ENCODE measurements at regions of chr1 and their contacts with region 1.

Region 1: GRCh38 chr1:41282679-41283317 is 40.7 kb upstream of the SCMH1 start:
- DNase-seq: no peak
- H3K4me3 ChIP-seq: no peak overlapping the region
- CTCF ChIP-seq: peak; percentile 93

Region 2: DNA sequence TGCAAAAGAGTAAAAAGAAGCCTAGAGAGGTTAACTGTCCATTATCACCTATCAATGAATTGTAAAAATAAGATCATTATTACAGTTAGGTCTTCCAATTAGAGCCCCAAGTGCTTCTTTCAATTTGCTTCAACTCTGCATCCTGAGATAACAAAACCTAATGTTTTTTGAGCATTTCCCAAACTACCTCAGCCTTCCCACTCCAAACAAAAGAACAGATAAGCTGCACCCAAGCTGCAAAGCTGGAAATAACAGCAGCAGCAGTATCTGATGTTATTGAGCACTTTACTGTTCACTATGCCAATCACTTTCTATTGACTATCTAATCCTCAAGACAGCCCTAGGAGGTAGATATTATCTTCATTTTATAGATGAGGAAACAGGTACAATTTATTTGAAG is 164.2 kb before region 1 on chr1:
- CTCF ChIA-PET with region 1: no interaction called
- POLR2A ChIA-PET with region 1: no interaction called
- DNase-seq: no peak
- H3K4me3 ChIP-seq: no peak overlapping the region
- CTCF ChIP-seq: no peak

Region 3: DNA sequence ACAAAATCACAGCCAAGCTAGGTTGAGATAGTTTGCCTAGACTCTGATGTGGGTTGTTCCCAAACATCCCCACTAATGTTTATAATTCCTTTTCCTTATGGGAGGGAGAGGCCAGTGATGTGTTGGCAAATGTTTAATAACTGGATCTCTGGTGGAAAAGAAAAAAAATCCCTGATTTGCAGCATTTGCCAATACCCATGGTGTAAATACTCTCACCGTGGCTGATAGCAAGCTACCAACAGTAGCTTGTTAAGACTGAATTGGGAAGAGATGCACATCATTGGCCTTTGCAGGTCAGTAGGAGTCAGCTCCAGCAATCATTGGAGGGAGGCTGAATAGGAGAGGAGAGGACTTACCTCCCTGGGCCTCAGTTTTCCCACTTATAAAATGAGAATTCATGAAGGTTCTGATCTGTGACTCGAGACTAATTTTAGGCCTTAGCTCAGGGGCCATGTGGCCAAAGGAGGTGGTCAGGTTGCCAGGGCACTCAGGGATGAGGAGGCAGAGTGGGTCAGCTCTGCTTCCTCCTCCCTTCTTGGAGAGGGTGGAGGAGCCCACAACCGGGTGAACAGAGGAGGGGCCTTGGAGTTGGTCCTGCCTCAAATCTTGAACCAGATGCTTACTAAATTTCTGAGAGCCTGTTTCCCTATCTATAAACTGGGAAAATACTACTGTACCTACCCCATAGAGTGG is 20.7 kb before region 1 on chr1:
- CTCF ChIA-PET with region 1: interaction called, 37 read pairs
- POLR2A ChIA-PET with region 1: no interaction called
- DNase-seq: no peak
- H3K4me3 ChIP-seq: no peak overlapping the region
- CTCF ChIP-seq: no peak

Region 4: DNA sequence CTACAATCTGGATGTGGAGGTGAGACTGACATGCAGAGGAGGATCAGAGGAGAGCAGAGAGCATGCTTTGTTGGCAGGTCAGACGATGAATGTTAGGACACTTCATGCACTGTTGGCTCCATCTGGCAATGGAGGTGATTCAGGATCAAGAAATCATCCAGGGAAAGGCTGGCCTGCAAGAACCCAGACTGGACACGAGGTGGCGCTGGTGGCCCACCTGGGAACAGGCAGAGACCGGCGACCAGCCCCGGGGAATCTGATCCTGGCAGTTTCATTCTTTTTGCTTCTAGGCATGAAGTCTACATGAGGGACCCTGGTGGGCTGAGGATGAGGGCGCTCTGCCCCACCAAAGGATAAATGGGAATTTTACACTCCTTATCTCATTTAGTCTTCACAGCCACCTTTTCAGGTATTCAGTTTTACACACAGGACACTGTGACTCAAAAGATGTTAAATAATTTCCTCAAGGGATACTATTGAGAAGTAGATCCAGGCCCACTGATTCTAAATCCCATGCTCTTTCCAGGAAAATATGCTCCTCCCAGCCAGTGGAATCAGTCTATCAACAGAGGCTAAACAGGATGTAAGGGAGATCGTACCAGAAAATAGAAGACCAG is 14.5 kb before region 1 on chr1:
- CTCF ChIA-PET with region 1: interaction called, 37 read pairs
- POLR2A ChIA-PET with region 1: no interaction called
- DNase-seq: no peak
- H3K4me3 ChIP-seq: no peak overlapping the region
- CTCF ChIP-seq: peak; percentile 93

Region 5: GRCh38 chr1:41294216-41294615 is 11.4 kb after region 1 on chr1:
- CTCF ChIA-PET with region 1: interaction called, 22 read pairs
- POLR2A ChIA-PET with region 1: no interaction called
- DNase-seq: no peak
- H3K4me3 ChIP-seq: no peak overlapping the region
- CTCF ChIP-seq: no peak

Region 6: DNA sequence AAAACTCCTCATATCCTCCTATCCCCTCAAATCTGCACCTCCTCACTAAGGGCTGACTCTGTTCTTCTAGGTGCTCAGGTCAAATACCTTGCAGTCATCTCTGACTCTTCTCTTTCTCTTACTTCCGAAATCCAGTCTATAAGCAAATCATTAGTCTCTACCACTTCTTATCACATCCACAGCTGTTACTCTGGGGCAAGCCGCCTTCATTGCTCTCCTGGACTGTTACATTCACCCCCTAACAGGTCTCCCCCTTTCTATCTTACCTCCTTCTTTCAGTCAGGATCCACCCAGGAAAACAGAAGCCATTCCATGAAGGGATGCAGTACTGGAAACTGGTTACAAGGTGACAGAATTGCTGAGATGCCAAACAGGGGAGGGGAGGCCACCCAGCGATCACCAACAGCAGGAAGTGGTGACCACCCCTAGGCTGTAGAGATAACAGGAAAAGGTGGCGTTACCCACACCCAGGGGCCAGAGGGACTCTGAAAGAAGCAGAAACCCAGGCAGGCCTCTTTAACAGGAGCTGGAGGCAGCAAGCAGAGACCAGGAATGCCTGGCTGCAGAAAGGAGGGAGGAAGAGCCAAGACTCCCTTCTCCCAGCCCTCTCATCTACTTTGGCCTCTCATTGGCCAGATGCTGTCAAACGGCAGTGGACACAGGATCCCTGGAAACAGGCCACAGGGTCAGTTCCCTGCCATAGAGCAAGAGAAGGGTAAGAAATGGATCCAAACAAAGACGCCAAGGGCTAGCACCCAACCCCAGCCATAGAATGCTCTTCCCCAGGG is 23.0 kb after region 1 on chr1:
- CTCF ChIA-PET with region 1: interaction called, 19 read pairs
- POLR2A ChIA-PET with region 1: no interaction called
- DNase-seq: no peak
- H3K4me3 ChIP-seq: no peak overlapping the region
- CTCF ChIP-seq: no peak

Region 7: DNA sequence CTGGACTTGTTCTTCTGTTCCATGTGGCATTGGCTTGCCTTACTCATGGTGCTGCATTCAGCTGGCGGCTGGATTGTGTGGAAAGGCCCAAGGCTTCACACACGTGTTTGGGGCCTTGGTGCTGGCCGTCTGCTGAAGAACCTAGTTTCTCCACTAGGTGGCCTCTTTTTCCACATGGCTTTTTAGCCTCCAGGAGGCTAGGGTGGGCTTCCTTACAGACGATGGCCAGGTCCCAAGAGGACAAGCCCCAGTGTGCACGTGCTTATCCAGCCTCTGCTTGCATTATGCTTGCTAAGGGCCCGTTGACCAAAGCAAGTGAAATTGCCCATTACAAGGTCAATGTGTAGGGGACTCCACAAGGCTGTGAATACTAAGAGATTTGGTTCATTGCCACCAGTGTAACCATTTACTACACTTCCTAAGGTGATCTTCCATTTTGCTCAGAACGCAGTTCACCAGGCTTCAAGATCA is 30.9 kb after region 1 on chr1:
- CTCF ChIA-PET with region 1: interaction called, 52 read pairs
- POLR2A ChIA-PET with region 1: no interaction called
- DNase-seq: no peak
- H3K4me3 ChIP-seq: no peak overlapping the region
- CTCF ChIP-seq: peak; percentile 23

Region 8: DNA sequence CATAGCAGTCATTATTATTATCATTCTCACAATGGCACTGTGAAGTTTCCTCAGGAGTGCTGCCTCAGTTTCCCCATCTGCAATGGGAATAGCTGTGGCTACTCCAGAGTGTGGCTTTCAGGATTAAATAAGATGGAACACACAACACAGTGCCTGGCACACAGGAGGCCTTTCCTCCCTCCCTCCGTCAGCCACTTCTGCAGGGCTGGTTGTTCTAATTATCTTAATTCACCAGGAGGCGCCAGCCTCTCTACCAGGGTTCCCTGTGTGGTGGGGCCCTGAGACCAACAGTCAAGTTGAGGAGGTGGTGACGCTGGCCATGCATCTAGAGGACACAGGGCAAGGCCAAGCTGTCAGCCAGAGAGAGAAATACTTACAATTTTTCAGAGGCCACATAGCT is 72.1 kb after region 1 on chr1:
- CTCF ChIA-PET with region 1: interaction called, 10 read pairs
- POLR2A ChIA-PET with region 1: no interaction called
- DNase-seq: no peak
- H3K4me3 ChIP-seq: no peak overlapping the region
- CTCF ChIP-seq: no peak